CD4-positive, alpha-beta memory T cell (primary cell): ENCODE measurements at regions of chr1 and their contacts with region 1.

Region 1: GRCh38 chr1:193479187-193479586 is 292.8 kb upstream of the B3GALT2 start:
- DNase-seq: peak; percentile 89 to 95 (median 93)
- H3K4me3 ChIP-seq: no peak overlapping the region
- H3K4me3 Mint-ChIP-seq: peak overlapping the region in 7 of 8 donors; percentile 37 to 79 (median 65)
- H3K27ac ChIP-seq: peak overlapping the region; percentile 68
- H3K27ac Mint-ChIP-seq: peak overlapping the region; percentile 86 to 98 (median 96)
- H3K4me1 ChIP-seq: peaks cover 70% of the 10 kb centered on the region
- H3K4me1 Mint-ChIP-seq: peaks cover 42 to 75% (median 47%) of the 10 kb centered on the region in 4 donors
- H3K27me3 ChIP-seq: no peaks in the 10 kb centered on the region
- H3K27me3 Mint-ChIP-seq: no peaks in the 10 kb centered on the region

Region 2: GRCh38 chr1:193183019-193183627 is 296.1 kb before region 1 on chr1:
- CTCF ChIA-PET with region 1: no interaction called
- POLR2A ChIA-PET with region 1: interaction called, 39 read pairs
- intact Hi-C with region 1: no loop called
- DNase-seq: peak in 4 of 5 donors; percentile 59 to 64 (median 62)
- H3K4me3 ChIP-seq: peak overlapping the region in 1 of 2 donors; percentile 10
- H3K4me3 Mint-ChIP-seq: peak overlapping the region; percentile 60 to 92 (median 81)
- H3K27ac ChIP-seq: peak overlapping the region; percentile 23
- H3K27ac Mint-ChIP-seq: peak overlapping the region in 4 of 7 donors; percentile 16 to 82 (median 68)
- H3K4me1 ChIP-seq: peaks cover 47% of the 10 kb centered on the region
- H3K4me1 Mint-ChIP-seq: peaks cover 28 to 52% (median 36%) of the 10 kb centered on the region in 4 donors
- H3K27me3 ChIP-seq: no peaks in the 10 kb centered on the region
- H3K27me3 Mint-ChIP-seq: no peaks in the 10 kb centered on the region

Region 3: DNA sequence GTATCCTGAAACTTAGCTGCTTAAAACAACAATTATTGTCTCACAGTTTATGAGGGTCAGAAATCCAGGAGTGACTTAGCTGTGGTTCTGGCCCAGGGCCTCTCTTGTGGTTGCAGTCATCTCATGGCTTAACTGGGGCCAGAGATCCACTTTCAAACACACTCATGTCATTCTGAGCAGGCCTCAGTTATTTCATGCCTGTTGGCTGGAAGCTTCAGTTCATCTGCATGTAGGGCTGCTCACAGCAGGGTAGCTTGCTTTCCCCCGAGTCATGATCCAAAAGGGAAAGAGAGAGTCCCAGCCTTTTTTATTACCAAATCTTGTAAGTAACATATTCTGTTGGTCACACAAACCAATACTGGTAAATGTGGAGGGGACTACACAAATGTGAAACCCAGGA is 196.2 kb before region 1 on chr1:
- CTCF ChIA-PET with region 1: no interaction called
- POLR2A ChIA-PET with region 1: no interaction called
- intact Hi-C with region 1: no loop called
- DNase-seq: no peak
- H3K4me3 ChIP-seq: no peak overlapping the region
- H3K4me3 Mint-ChIP-seq: no peak overlapping the region
- H3K27ac ChIP-seq: no peak overlapping the region
- H3K27ac Mint-ChIP-seq: peak overlapping the region in 2 of 7 donors; percentile 15 to 18
- H3K4me1 ChIP-seq: no peaks in the 10 kb centered on the region
- H3K4me1 Mint-ChIP-seq: peaks cover 7 to 17% (median 14%) of the 10 kb centered on the region in 4 donors
- H3K27me3 ChIP-seq: no peaks in the 10 kb centered on the region
- H3K27me3 Mint-ChIP-seq: no peaks in the 10 kb centered on the region

Region 4: GRCh38 chr1:193417945-193418744 is 61.0 kb before region 1 on chr1:
- CTCF ChIA-PET with region 1: interaction called, 3 read pairs
- POLR2A ChIA-PET with region 1: interaction called, 14 read pairs
- intact Hi-C with region 1: loop called (anchors 2 kb)
- DNase-seq: peak in 4 of 5 donors; percentile 53 to 62 (median 56)
- H3K4me3 ChIP-seq: peak overlapping the region; percentile 24 to 50
- H3K4me3 Mint-ChIP-seq: peak overlapping the region; percentile 79 to 89 (median 84)
- H3K27ac ChIP-seq: peak overlapping the region; percentile 58
- H3K27ac Mint-ChIP-seq: peak overlapping the region; percentile 76 to 97 (median 92)
- H3K4me1 ChIP-seq: peaks cover 34% of the 10 kb centered on the region
- H3K4me1 Mint-ChIP-seq: peaks cover 32 to 54% (median 36%) of the 10 kb centered on the region in 4 donors
- H3K27me3 ChIP-seq: no peaks in the 10 kb centered on the region
- H3K27me3 Mint-ChIP-seq: no peaks in the 10 kb centered on the region

Region 5: DNA sequence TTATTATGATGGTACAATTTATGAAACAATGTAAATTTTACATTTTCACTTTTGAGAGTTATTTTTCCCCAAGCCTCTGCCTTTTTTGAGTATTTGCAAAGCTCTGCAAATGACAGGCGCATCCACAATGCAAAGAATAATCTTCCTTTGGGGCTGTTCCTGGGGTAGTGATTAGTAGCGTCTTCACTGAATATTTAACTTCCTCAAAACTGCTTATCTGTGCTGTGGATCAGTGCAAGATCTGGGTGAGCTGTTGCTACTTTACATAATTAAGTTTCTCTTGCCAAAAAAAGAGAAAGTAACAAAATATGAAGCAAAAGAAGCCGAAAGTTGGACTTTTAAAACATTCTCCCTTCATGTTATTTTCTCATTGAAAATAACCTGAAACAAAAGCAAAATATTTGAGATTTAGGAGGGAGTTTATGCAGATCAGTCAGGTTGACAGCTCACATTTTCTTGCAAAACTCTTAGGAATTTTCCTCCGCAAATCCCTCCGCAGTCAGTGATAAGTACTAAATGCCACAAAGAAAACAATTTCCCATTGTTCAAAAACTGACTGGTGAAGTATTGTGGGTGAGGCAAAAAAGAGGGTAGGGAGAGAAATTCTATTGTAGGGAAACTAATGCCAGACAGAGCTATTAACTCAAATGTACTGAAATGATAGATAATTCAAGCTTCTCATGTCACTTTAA is 16.4 kb before region 1 on chr1:
- CTCF ChIA-PET with region 1: interaction called, 7 read pairs
- POLR2A ChIA-PET with region 1: interaction called, 411 read pairs
- intact Hi-C with region 1: loop called (anchors 1 kb)
- DNase-seq: peak; percentile 31 to 59 (median 53)
- H3K4me3 ChIP-seq: peak overlapping the region in 1 of 2 donors; percentile 6
- H3K4me3 Mint-ChIP-seq: peak overlapping the region; percentile 47 to 84 (median 82)
- H3K27ac ChIP-seq: peak overlapping the region; percentile 48
- H3K27ac Mint-ChIP-seq: peak overlapping the region in 6 of 7 donors; percentile 87 to 98 (median 94)
- H3K4me1 ChIP-seq: peaks cover 67% of the 10 kb centered on the region
- H3K4me1 Mint-ChIP-seq: peaks cover 40 to 68% (median 46%) of the 10 kb centered on the region in 4 donors
- H3K27me3 ChIP-seq: no peaks in the 10 kb centered on the region
- H3K27me3 Mint-ChIP-seq: no peaks in the 10 kb centered on the region

Region 6: GRCh38 chr1:193537266-193538002 is 58.2 kb after region 1 on chr1:
- CTCF ChIA-PET with region 1: interaction called, 15 read pairs
- POLR2A ChIA-PET with region 1: interaction called, 106 read pairs
- intact Hi-C with region 1: loop called (anchors 1 kb)
- DNase-seq: peak; percentile 61 to 80 (median 73)
- H3K4me3 ChIP-seq: peak overlapping the region in 1 of 2 donors; percentile 12
- H3K4me3 Mint-ChIP-seq: peak overlapping the region; percentile 79 to 88 (median 84)
- H3K27ac ChIP-seq: peak overlapping the region; percentile 71
- H3K27ac Mint-ChIP-seq: peak overlapping the region; percentile 83 to 95 (median 91)
- H3K4me1 ChIP-seq: peaks cover 58% of the 10 kb centered on the region
- H3K4me1 Mint-ChIP-seq: peaks cover 39 to 58% (median 47%) of the 10 kb centered on the region in 4 donors
- H3K27me3 ChIP-seq: no peaks in the 10 kb centered on the region
- H3K27me3 Mint-ChIP-seq: no peaks in the 10 kb centered on the region

Region 7: GRCh38 chr1:193629875-193630274 is 150.7 kb after region 1 on chr1:
- CTCF ChIA-PET with region 1: no interaction called
- POLR2A ChIA-PET with region 1: no interaction called
- intact Hi-C with region 1: no loop called
- DNase-seq: no peak
- H3K4me3 ChIP-seq: no peak overlapping the region
- H3K4me3 Mint-ChIP-seq: no peak overlapping the region
- H3K27ac ChIP-seq: no peak overlapping the region
- H3K27ac Mint-ChIP-seq: peak overlapping the region in 1 of 7 donors; percentile 5
- H3K4me1 ChIP-seq: peaks cover 12% of the 10 kb centered on the region
- H3K4me1 Mint-ChIP-seq: peaks cover 10 to 14% (median 11%) of the 10 kb centered on the region in 4 donors
- H3K27me3 ChIP-seq: no peaks in the 10 kb centered on the region
- H3K27me3 Mint-ChIP-seq: peaks cover 0 to 2% of the 10 kb centered on the region in 2 donors

Region 8: GRCh38 chr1:193868425-193868824 is 389.2 kb after region 1 on chr1:
- CTCF ChIA-PET with region 1: no interaction called
- POLR2A ChIA-PET with region 1: no interaction called
- intact Hi-C with region 1: no loop called
- DNase-seq: no peak
- H3K4me3 ChIP-seq: no peak overlapping the region
- H3K4me3 Mint-ChIP-seq: no peak overlapping the region
- H3K27ac ChIP-seq: no peak overlapping the region
- H3K27ac Mint-ChIP-seq: peak overlapping the region in 1 of 7 donors; percentile 68
- H3K4me1 ChIP-seq: no peaks in the 10 kb centered on the region
- H3K4me1 Mint-ChIP-seq: no peaks in the 10 kb centered on the region
- H3K27me3 ChIP-seq: no peaks in the 10 kb centered on the region
- H3K27me3 Mint-ChIP-seq: no peaks in the 10 kb centered on the region

Region 9: GRCh38 chr1:194289569-194290266 is 810.5 kb after region 1 on chr1:
- CTCF ChIA-PET with region 1: no interaction called
- POLR2A ChIA-PET with region 1: interaction called, 15 read pairs
- intact Hi-C with region 1: no loop called
- DNase-seq: peak; percentile 72 to 89 (median 81)
- H3K4me3 ChIP-seq: peak overlapping the region; percentile 2 to 42
- H3K4me3 Mint-ChIP-seq: peak overlapping the region; percentile 60 to 84 (median 75)
- H3K27ac ChIP-seq: peak overlapping the region; percentile 50
- H3K27ac Mint-ChIP-seq: peak overlapping the region; percentile 12 to 86 (median 75)
- H3K4me1 ChIP-seq: peaks cover 22% of the 10 kb centered on the region
- H3K4me1 Mint-ChIP-seq: peaks cover 22 to 31% (median 24%) of the 10 kb centered on the region in 4 donors
- H3K27me3 ChIP-seq: no peaks in the 10 kb centered on the region
- H3K27me3 Mint-ChIP-seq: no peaks in the 10 kb centered on the region